ENCODE measurements at regions of chr7 and their contacts with region 1.

Region 1: DNA sequence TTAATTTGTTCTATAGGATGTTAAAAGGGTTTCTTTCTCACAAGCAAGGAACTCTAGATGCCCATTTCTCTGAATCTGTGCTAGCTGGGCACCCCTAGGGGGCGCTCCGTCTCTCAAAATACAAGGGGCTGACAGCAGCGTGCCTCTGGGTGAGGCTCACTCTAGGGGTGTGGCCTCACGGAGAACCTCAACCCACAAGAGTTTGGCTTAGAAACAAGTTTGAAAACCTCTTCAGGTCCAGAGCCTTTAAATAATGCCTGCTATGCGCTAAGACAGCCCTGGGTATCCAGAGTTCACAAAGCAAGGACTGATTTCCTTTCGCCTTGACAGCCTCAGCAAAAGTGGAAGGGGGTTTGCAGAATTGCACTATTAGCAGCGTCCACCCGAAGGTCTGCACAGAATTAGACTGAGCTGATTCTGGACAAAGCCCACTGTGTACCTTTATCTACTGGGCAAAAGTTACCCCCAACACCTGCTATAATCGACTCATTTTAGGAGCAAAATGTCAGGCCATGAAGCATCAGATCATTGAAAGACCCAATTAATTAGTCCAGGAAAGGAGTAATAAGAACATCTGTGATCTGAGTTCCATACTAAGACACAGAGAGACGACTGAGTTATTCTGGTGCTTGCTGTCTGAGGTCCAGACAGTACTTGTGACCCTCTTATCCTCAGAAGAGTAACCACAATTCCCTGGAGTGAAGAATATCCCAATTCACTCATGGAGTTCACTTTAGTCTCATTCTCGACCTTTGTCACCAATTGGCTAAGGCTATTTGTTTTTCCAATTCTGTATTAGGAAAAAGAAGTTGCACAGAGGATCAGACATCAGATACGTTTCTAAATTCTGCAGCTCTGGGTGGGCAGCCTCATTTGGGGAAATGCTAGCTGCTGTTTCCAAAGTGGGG is 574 bp upstream of the CPED1 start:
- DNase-seq: peak; percentile 68
- ATAC-seq: peak; percentile 95
- H3K4me3 Mint-ChIP-seq: peak overlapping the region; percentile 81
- H3K27ac Mint-ChIP-seq: no peak overlapping the region
- H3K4me1 Mint-ChIP-seq: peaks cover 23% of the 10 kb centered on the region
- H3K27me3 Mint-ChIP-seq: peaks cover 33% of the 10 kb centered on the region
- CTCF ChIP-seq: peak; percentile 95

Region 2: GRCh38 chr7:120802751-120803150 is 185.2 kb before region 1 on chr7:
- CTCF ChIA-PET with region 1: no interaction called
- POLR2A ChIA-PET with region 1: no interaction called
- intact Hi-C with region 1: no loop called
- DNase-seq: no peak
- ATAC-seq: no peak
- H3K4me3 Mint-ChIP-seq: no peak overlapping the region
- H3K27ac Mint-ChIP-seq: no peak overlapping the region
- H3K4me1 Mint-ChIP-seq: no peaks in the 10 kb centered on the region
- H3K27me3 Mint-ChIP-seq: peaks cover 11% of the 10 kb centered on the region
- CTCF ChIP-seq: no peak

Region 3: DNA sequence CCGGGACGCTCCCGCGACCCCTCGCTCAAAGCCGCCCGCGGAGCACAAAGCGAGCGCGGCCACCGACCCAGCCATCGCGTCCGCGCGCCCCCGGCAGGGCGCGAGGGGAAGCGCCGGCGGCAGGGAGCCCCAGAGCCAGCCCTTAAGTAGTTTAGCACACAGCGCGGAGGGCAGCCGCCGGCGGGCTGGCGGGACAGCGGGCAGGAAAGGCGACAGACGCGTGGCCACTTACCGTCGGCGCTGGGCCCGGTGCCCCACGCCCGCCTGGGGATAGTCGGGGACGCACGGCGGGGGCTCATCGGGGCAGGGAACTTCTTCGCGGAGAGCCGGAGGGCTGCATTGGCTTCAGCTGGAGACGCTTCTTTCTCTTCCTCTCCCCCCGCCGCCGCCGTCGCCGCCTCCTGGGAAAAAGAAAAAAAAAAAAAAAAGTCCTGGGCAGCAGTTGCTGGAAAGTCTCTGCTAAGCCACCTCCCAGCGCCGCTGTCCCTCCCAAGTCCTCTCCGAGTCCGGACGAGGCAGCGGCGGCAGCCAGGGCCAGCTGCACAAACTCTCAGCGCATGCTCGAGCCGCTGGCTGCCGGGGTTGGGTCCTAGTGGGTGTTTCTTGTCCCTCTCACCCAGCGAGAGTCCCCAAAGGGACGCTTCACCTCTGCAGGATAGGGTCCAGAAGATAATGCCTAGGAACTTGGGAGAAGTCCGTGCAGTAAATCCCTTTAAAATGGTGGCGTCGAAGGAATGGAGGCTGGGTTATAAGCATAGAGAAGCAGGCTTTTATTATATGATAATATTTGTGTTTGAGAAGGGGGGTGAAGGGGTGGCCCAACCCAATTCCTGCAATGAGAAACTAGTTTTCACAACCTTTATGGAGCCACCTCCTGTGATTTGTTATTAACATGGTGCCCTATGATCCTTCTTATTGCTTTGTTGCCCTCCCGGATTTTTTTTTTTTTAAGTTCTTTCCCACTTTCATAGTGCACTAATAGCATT is 130.1 kb before region 1 on chr7 and contains the start of gene TSPAN12:
- CTCF ChIA-PET with region 1: no interaction called
- POLR2A ChIA-PET with region 1: no interaction called
- intact Hi-C with region 1: loop called (anchors 5 kb)
- DNase-seq: peak; percentile 54
- ATAC-seq: peak; percentile 87
- H3K4me3 Mint-ChIP-seq: peak within 1 kb of the TSS; percentile 90
- H3K27ac Mint-ChIP-seq: no peak within 1 kb of the TSS
- H3K4me1 Mint-ChIP-seq: peaks cover 14% of the 10 kb centered on the region
- H3K27me3 Mint-ChIP-seq: peaks cover 59% of the 10 kb centered on the region
- CTCF ChIP-seq: no peak
- total RNA-seq, gene TSPAN12: not detected in 2 replicates

Region 4: GRCh38 chr7:121000081-121000983 is 12.4 kb after region 1 on chr7:
- CTCF ChIA-PET with region 1: interaction called, 11 read pairs
- POLR2A ChIA-PET with region 1: interaction called, 3 read pairs
- intact Hi-C with region 1: no loop called
- DNase-seq: no peak
- ATAC-seq: no peak
- H3K4me3 Mint-ChIP-seq: no peak overlapping the region
- H3K27ac Mint-ChIP-seq: no peak overlapping the region
- H3K4me1 Mint-ChIP-seq: peaks cover 14% of the 10 kb centered on the region
- H3K27me3 Mint-ChIP-seq: peaks cover 9% of the 10 kb centered on the region
- CTCF ChIP-seq: no peak

Region 5: DNA sequence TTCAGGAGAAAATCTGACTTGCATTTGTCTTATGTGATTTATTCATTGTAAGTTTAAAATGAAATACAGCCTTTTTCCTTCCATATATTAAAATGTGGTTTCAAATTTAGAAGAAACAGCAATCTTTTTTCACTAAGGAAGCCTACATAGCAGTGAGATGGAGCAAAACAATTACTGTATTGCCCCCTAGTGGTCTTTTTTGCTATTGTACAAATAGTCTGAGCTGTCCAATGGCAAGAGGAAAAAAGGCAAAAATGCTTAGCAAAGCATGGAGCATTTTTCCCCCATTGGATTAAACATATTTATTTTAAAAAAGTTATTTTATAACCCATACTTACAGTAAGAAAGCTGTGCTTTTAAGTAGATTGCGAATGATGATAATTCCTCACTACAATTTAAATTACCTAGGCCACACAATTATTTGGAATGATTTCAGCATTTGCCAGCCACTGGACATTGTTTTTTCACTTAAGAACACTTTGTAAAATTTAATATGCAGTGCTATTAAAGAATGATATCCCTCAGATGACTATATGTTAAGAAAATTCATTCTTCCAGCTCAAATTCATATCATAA is 120.1 kb after region 1 on chr7:
- CTCF ChIA-PET with region 1: interaction called, 31 read pairs
- POLR2A ChIA-PET with region 1: no interaction called
- intact Hi-C with region 1: loop called (anchors 1 kb)
- DNase-seq: no peak
- ATAC-seq: peak; percentile 77
- H3K4me3 Mint-ChIP-seq: no peak overlapping the region
- H3K27ac Mint-ChIP-seq: no peak overlapping the region
- H3K4me1 Mint-ChIP-seq: no peaks in the 10 kb centered on the region
- H3K27me3 Mint-ChIP-seq: no peaks in the 10 kb centered on the region
- CTCF ChIP-seq: peak; percentile 83

Region 6: GRCh38 chr7:121994625-121995410 is 1006.9 kb after region 1 on chr7:
- CTCF ChIA-PET with region 1: interaction called, 7 read pairs
- POLR2A ChIA-PET with region 1: no interaction called
- intact Hi-C with region 1: loop called (anchors 1 kb)
- DNase-seq: no peak
- ATAC-seq: peak; percentile 86
- H3K4me3 Mint-ChIP-seq: no peak overlapping the region
- H3K27ac Mint-ChIP-seq: no peak overlapping the region
- H3K4me1 Mint-ChIP-seq: no peaks in the 10 kb centered on the region
- H3K27me3 Mint-ChIP-seq: peaks cover 2% of the 10 kb centered on the region
- CTCF ChIP-seq: peak; percentile 83